HEK293 (cell line): ENCODE measurements at regions of chr2 and their contacts with region 1.

Region 1: DNA sequence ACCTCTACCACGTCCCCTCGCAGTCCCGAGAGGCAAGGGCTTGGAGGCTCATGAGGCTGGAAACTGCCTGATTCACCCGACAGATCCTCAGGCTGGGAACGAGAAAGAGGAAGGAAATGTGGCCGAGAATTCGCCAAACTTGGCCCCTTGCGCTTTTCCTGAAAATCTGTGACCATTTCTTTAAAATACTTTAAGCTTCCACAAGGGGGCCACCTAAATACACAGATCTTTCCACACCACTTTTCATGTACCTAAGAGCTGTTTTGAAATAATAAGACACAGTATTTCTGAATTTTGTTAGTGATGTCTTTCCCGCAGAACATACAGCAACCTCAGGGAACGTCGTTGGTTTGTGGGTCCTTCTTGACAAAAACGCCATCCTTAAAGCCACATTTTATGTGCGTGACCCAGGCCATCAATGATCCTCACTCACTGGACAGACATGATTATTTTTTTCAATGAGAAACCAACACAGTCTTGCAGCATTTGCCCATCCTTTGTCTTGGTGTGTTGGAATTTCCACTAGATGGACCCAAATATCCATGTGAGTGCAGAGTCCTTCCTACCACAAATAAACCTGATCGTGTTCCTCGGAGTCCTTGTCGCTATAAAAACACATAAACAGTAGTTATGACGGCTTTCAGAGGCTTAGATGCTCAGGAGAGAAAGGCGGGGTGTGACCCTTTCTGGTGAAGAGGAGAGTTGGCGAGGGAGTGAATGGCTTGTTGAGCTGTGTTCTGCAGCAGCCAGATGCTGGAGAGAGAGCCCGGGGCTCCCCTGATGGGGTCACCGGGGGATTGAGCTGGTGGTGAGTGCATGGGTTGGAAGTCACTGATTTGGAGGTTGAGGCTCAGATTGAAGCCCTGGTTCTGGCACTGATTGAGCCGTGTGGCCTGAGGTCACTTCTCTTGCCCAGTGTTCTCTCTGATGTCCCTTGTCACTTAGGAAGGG is 25.0 kb downstream of the DCDC2C start:
- H3K4me3 ChIP-seq: no peak overlapping the region
- H3K27ac ChIP-seq: no peak overlapping the region
- H3K4me1 ChIP-seq: no peaks in the 10 kb centered on the region
- CTCF ChIP-seq: no peak

Region 2: GRCh38 chr2:3692381-3692780 is 36.0 kb before region 1 on chr2:
- CTCF ChIA-PET with region 1: interaction called, 19 read pairs
- POLR2A ChIA-PET with region 1: no interaction called
- H3K4me3 ChIP-seq: no peak overlapping the region
- H3K27ac ChIP-seq: no peak overlapping the region
- H3K4me1 ChIP-seq: no peaks in the 10 kb centered on the region
- CTCF ChIP-seq: peak; percentile 44; the same call in 1 of the 2 replicates

Region 3: DNA sequence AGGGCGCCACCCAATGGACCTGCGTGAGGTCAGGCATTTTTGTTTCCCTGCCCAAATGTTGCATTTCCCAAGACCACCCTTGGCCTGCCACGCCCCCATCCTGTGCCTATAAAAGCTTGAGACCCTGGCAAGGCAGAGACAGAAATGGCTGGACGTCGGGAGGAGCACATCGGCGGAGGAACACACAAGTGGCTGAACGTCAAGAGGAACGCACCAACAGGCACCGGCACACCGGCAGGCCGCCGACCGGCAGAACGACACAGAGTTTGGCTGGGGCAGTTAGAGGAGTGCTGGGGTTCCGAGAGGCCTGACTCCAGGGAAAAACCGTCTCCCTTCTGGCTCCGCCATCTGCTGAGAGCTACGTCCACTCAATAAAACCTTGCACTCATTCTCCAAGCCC is 10.9 kb after region 1 on chr2:
- CTCF ChIA-PET with region 1: interaction called, 18 read pairs
- POLR2A ChIA-PET with region 1: no interaction called
- H3K4me3 ChIP-seq: no peak overlapping the region
- H3K27ac ChIP-seq: no peak overlapping the region
- H3K4me1 ChIP-seq: no peaks in the 10 kb centered on the region
- CTCF ChIP-seq: no peak

Region 4: GRCh38 chr2:3780477-3781402 is 52.4 kb after region 1 on chr2:
- CTCF ChIA-PET with region 1: interaction called, 40 read pairs
- POLR2A ChIA-PET with region 1: no interaction called
- H3K4me3 ChIP-seq: no peak overlapping the region
- H3K27ac ChIP-seq: no peak overlapping the region
- H3K4me1 ChIP-seq: no peaks in the 10 kb centered on the region
- CTCF ChIP-seq: no peak

Region 5: GRCh38 chr2:3805201-3805939 is 77.0 kb after region 1 on chr2:
- CTCF ChIA-PET with region 1: interaction called, 19 read pairs
- POLR2A ChIA-PET with region 1: no interaction called
- H3K4me3 ChIP-seq: no peak overlapping the region
- H3K27ac ChIP-seq: no peak overlapping the region
- H3K4me1 ChIP-seq: no peaks in the 10 kb centered on the region
- CTCF ChIP-seq: no peak

Region 6: DNA sequence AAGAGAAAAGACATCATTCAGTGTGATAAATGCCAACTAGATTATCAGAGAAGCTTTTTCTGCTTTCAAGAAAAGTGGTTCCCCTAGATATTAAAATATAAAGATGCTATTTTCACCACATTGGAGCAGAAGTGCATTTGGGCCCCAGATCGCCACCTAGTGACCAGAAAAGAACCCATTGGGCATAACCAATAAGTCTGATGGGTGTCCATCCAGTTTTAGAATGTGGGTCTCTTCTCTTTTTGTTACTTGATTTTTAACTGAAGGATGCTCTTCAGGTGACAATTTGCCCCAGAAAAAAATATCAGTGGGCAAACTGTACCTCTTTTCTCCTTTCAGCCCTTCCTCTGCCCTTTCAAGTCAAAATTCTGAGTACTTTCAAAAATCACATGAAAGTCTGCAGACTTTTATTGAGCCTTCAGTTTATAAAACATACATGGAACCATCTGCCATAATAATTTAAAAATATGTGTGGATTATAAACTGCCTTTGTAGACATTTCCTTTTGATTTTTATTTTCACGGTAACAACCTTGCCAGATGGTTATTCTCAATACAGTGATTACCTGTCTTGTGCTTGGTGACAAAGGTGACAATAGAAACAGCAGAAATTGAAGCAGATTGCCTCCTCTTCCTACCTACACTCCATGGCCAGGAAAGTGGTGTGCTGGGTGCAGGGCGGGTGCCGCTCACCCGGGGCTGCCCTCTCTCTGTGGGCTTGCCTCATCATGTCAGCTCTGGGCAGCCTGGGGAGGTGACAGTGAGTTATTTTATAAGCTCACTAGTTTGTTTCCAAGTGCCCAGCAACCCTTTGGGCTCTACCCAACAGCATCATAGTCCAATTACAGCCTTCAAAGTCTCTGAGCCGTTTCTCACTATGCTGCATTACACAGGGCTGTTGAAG is 99.5 kb after region 1 on chr2:
- CTCF ChIA-PET with region 1: interaction called, 34 read pairs
- POLR2A ChIA-PET with region 1: no interaction called
- H3K4me3 ChIP-seq: no peak overlapping the region
- H3K27ac ChIP-seq: no peak overlapping the region
- H3K4me1 ChIP-seq: no peaks in the 10 kb centered on the region
- CTCF ChIP-seq: no peak

Region 7: GRCh38 chr2:3927031-3927430 is 198.7 kb after region 1 on chr2:
- CTCF ChIA-PET with region 1: no interaction called
- POLR2A ChIA-PET with region 1: no interaction called
- H3K4me3 ChIP-seq: no peak overlapping the region
- H3K27ac ChIP-seq: no peak overlapping the region
- H3K4me1 ChIP-seq: no peaks in the 10 kb centered on the region
- CTCF ChIP-seq: no peak